A673 (cell line): ENCODE measurements at regions of chr15 and their contacts with region 1.

Region 1: DNA sequence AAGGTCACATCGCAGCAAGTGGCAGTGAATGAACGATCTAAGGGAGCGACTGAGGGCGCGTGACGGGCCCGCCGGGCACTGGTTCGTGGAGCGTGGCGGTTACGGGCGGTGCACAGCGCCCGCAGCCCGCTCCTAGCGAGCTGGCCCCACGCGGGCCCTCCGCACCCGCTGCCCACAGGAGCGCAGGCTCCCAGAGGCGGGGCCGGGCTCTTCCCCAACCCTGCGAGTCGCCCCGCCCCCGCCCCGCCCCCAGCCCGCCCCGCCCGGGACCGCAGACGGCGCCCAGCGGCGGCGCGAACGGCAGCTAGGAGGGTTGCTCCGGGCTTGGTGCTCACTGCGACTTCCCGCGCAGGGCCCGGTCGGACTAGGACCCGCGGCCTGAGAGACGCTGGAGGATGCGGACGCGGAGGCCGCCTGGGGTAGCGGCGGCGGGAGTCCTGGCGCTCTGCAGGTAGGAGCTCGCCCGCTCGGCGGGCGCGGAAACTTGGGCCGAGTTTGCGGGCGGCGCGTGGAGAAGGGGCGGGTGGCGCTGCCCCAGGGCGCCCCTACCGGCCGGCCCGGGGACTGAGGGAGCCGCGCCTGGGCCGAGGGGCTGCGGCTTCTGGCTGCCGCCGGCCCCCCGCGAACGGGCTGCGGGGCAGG is at the start of gene C15orf39:
- DNase-seq: peak; percentile 83
- H3K4me3 ChIP-seq: peak within 1 kb of the TSS; percentile 99
- H3K27ac ChIP-seq: peak within 1 kb of the TSS; percentile 93
- H3K4me1 ChIP-seq: peaks cover 30% of the 10 kb centered on the region
- H3K27me3 ChIP-seq: no peaks in the 10 kb centered on the region
- CTCF ChIP-seq: peak; percentile 63
- total RNA-seq, gene C15orf39: 28.9 and 30.3 TPM in 2 replicates

Region 2: DNA sequence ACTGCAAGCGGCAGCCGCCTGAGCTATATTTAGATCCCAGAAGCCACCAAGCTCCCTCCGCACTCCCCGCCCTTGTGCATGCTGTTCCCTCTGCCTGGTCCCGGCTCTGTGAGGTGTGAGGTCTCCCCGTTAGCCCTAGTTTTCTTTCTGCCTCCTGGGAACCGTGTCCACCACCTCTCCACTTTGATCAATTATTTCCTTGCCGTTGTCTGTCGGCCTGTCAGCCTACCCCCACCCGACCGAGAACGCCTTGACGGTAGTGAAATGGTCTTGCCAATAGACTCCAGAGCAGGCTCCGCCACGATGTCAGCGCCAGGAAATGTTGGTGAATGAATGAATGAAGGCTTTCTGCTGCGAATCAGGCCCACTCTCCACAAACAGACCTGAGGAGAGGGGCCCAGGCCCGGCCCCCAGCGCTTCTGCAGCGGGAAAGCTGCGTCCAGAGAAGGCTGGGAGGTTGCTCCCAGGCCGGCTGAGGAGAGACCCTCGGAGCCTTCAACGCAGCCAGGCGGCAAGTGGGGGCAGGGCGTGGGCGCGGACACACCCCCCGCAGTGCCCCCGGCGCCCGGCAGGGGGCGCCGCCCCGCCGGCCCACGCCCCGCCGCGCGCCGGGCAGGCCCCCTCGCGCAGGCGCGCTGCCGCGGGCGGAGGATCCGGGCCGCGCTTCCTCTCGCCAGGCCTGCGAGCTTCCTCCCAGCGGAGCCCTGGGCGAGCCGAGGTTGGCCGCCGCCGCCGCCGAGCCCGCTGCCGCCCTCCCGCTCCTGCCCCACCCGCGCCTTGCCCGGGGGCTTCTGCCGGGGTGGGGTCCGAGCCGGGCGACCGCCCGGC is 420.1 kb before region 1 on chr15 and contains the start of gene CSK:
- CTCF ChIA-PET with region 1: no interaction called
- POLR2A ChIA-PET with region 1: no interaction called
- intact Hi-C with region 1: loop called (anchors 10 kb)
- DNase-seq: peak; percentile 87
- H3K4me3 ChIP-seq: peak within 1 kb of the TSS; percentile 93
- H3K27ac ChIP-seq: peak within 1 kb of the TSS; percentile 78
- H3K4me1 ChIP-seq: peaks cover 61% of the 10 kb centered on the region
- H3K27me3 ChIP-seq: no peaks in the 10 kb centered on the region
- CTCF ChIP-seq: peak; percentile 47
- total RNA-seq, gene CSK: 90.8 and 103 TPM in 2 replicates

Region 3: DNA sequence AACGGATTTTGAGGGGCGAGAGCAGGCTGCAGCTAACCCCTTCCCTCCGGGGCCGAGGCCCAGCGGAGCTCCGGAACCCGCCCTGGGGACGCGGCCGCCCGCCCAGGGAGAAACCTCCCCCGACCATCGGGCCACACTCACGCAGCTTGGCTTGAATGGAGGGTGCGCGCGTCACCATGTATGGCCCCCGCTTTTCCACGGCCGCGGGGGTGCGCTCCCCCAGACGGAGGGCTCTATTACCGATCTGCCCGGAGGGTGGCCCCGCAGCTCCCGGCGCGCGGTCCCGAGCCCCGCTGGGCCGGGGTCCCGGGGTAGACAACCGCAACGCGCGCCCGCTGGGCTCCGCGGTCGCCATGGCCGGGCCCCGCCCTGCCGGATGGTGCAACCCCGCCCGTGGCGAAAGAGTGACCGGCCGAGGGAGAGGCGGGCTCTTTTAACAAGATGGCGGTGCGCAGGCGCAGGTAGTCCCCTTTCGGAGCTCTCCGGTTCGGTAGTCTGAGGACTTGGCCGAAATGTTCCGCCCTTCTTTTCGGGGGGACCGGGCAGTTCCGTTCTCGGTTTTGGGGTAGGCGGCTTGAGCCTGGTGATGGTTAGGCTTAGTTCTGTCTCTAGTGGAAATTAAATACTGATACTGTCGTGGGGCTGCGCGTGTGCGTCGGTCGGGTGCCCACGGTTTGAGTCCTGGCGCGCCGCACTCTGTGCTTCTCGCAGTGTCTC is 295.1 kb before region 1 on chr15 and contains the start of gene FAM219B:
- CTCF ChIA-PET with region 1: no interaction called
- POLR2A ChIA-PET with region 1: no interaction called
- intact Hi-C with region 1: loop called (anchors 10 kb)
- DNase-seq: peak; percentile 87
- H3K4me3 ChIP-seq: peak within 1 kb of the TSS; percentile 85
- H3K27ac ChIP-seq: peak within 1 kb of the TSS; percentile 96
- H3K4me1 ChIP-seq: no peaks in the 10 kb centered on the region
- H3K27me3 ChIP-seq: no peaks in the 10 kb centered on the region
- CTCF ChIP-seq: no peak
- total RNA-seq, gene FAM219B: 86.6 and 93.2 TPM in 2 replicates

Region 4: GRCh38 chr15:75029378-75030022 is 172.2 kb before region 1 on chr15:
- CTCF ChIA-PET with region 1: interaction called, 13 read pairs
- POLR2A ChIA-PET with region 1: no interaction called
- intact Hi-C with region 1: loop called (anchors 1 kb)
- DNase-seq: peak; percentile 97
- H3K4me3 ChIP-seq: peak overlapping the region; percentile 21
- H3K27ac ChIP-seq: peak overlapping the region; percentile 66
- H3K4me1 ChIP-seq: peaks cover 54% of the 10 kb centered on the region
- H3K27me3 ChIP-seq: no peaks in the 10 kb centered on the region
- CTCF ChIP-seq: peak; percentile 92

Region 5: DNA sequence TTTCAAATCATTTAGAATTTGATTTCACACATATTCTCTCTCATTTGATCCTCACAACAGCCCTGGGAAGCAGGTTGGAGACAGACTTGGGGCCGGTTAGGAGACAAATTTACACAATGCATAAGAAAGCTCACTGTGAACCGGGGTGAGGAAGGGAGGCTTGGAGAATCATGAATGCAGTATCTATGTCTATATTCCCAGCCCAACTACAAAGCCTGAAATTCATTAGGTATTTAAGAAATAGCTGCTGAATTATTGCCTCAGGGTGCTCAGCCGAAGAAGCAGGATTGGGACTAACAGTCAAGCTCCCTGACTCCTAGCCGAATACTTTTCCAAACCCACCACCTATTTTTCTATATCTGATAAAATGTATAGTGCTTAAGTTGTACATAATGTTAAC is 48.0 kb after region 1 on chr15:
- CTCF ChIA-PET with region 1: no interaction called
- POLR2A ChIA-PET with region 1: no interaction called
- intact Hi-C with region 1: no loop called
- DNase-seq: no peak
- H3K4me3 ChIP-seq: no peak overlapping the region
- H3K27ac ChIP-seq: no peak overlapping the region
- H3K4me1 ChIP-seq: no peaks in the 10 kb centered on the region
- H3K27me3 ChIP-seq: peaks cover 3% of the 10 kb centered on the region
- CTCF ChIP-seq: no peak

Region 6: DNA sequence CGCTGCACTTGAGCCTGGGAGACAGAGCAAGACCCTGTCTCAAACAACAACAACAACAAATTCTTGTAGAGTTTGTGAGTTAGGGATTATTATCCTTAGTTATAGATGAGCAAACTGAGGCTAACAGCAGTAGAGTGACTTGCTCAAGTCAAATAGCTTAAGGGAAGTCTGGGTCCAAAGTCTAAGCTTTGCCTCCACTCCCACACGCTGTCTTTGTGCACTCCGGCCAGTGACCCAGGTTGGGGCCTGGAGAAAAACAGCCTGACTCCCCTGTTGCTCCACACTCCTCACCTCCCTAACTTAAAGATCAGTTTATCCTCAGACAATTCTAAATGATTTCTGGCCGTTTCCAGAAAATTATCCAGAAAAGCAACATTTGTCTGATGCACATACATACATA is 258.9 kb after region 1 on chr15:
- CTCF ChIA-PET with region 1: no interaction called
- POLR2A ChIA-PET with region 1: no interaction called
- intact Hi-C with region 1: no loop called
- DNase-seq: no peak
- H3K4me3 ChIP-seq: no peak overlapping the region
- H3K27ac ChIP-seq: no peak overlapping the region
- H3K4me1 ChIP-seq: no peaks in the 10 kb centered on the region
- H3K27me3 ChIP-seq: no peaks in the 10 kb centered on the region
- CTCF ChIP-seq: no peak